Pancreas (tissue), 10 donors: ENCODE measurements at regions of chr3 and their contacts with region 1.

Region 1: DNA sequence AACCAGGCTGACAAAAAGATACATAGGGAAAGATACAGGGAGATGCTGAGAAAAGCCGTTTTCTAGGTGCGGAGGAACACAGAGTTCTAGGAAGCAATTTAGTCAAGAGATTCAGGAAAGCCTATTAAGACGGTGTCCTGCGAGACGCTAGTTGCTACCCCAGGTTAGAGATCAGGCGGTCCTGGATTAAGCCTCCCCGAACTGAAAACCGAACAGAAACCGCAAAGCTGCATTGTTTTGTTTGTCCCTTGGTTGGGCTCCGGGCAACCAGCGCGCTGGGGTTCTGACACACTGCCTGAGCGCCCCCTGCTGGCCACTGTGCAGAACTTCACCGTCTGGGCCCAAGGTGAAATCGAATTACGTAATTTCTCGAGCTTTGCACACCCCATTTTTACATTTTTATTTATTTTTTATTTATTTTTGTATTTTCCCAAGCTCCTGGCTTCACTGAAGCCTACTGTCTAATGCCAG is 37.3 kb upstream of the NDUFB4 start:
- DNase-seq: peak; percentile 83 to 94 (median 88)
- ATAC-seq: peak; percentile 75 to 95 (median 88)
- H3K4me3 ChIP-seq: peak overlapping the region in 2 of 4 donors; percentile 39 to 47
- H3K27ac ChIP-seq: peak overlapping the region in 3 of 4 donors; percentile 39 to 52 (median 50)
- H3K4me1 ChIP-seq: peaks cover 7 to 19% (median 9%) of the 10 kb centered on the region in 3 donors
- H3K27me3 ChIP-seq: no peaks in the 10 kb centered on the region
- CTCF ChIP-seq: peak; percentile 99 to 100 (median 99)

Region 2: DNA sequence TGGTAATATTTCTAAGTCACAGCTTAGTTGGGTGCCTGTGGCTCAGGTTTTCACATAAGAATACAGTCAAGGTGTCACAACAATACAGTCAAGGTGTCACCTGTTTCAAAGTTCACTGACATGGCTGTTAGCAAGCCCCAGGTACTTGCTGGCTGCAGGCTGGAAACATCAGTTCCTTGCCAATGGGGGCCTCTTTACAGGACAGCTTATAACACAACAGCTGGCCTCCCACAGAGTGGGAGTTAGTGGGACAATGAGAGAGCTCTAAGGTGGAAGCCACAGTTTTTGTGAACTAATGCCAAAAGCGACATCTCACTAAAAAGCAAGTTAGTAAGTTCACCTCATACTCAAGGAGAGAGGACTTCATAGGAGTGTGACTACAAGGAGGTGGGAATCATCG is 319.2 kb before region 1 on chr3:
- intact Hi-C with region 1: loop called in 2 of 3 experiments (anchors 5 to 10 kb)
- DNase-seq: no peak
- ATAC-seq: no peak
- H3K4me3 ChIP-seq: no peak overlapping the region
- H3K27ac ChIP-seq: no peak overlapping the region
- H3K4me1 ChIP-seq: no peaks in the 10 kb centered on the region
- H3K27me3 ChIP-seq: peaks cover 0 to 11% (median 0%) of the 10 kb centered on the region in 4 donors
- CTCF ChIP-seq: no peak

Region 3: DNA sequence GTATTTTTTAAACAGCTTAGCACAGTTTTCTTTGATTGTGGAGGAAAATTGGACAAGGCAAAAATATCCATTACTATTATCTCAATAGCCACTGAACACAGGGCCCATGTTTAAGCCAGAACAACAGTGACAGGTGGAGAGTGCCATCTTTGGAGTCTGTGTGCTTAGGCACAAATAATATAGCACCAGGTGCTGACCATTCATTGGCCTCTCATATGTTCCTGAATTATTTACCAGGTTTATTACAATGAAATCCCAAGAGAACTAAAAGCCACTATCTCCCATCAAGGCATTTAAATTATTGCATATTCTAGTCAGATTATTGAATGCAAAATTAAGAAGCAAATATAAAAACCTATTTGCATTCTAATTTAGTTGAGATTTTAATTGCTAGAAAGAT is 313.4 kb before region 1 on chr3:
- intact Hi-C with region 1: loop called in 2 of 3 experiments (anchors 5 to 10 kb)
- DNase-seq: no peak
- ATAC-seq: no peak
- H3K4me3 ChIP-seq: no peak overlapping the region
- H3K27ac ChIP-seq: no peak overlapping the region
- H3K4me1 ChIP-seq: no peaks in the 10 kb centered on the region
- H3K27me3 ChIP-seq: peaks cover 0 to 11% (median 0%) of the 10 kb centered on the region in 4 donors
- CTCF ChIP-seq: no peak

Region 4: DNA sequence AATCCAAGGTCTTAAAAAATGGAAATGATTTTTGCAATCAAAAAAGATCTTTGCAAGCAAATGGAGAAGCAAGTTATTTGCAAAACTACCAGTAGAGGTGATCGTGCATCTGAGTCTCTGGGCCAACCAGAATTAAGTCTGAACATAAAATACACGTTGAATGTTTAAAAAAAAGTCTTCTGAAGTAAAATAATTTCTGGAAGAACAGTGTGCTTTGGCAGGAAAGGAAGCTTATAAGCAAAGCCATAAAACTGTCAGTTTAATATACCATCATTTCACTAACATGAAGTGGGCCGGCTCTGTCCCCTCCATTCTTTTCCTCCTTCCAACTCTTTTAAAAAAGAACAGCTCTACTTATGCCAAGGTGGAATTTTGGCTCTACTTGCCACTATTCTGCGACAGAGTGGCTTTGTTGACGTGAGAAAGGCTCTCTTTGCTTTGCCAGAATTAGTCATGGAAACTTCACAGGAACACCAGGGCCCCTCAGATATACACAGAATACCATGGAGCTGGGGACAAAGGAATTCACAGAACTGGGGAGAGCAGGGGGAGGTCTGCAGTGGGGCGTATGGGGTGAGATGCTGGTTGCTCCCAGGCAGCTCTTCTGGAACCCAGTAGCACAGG is 137.8 kb before region 1 on chr3:
- intact Hi-C with region 1: loop called in 1 of 3 experiments (anchors 10 kb)
- DNase-seq: no peak
- ATAC-seq: no peak
- H3K4me3 ChIP-seq: no peak overlapping the region
- H3K27ac ChIP-seq: peak overlapping the region in 3 of 4 donors; percentile 34 to 59 (median 40)
- H3K4me1 ChIP-seq: peaks cover 0 to 7% (median 0%) of the 10 kb centered on the region in 3 donors
- H3K27me3 ChIP-seq: no peaks in the 10 kb centered on the region
- CTCF ChIP-seq: no peak

Region 5: GRCh38 chr3:120795017-120795648 is 236.3 kb after region 1 on chr3:
- intact Hi-C with region 1: loop called in 2 of 3 experiments (anchors 5 kb)
- DNase-seq: peak in 5 of 6 donors; percentile 33 to 87 (median 72)
- ATAC-seq: peak; percentile 76 to 97 (median 88)
- H3K4me3 ChIP-seq: no peak overlapping the region
- H3K27ac ChIP-seq: no peak overlapping the region
- H3K4me1 ChIP-seq: no peaks in the 10 kb centered on the region
- H3K27me3 ChIP-seq: no peaks in the 10 kb centered on the region
- CTCF ChIP-seq: peak; percentile 40 to 65 (median 52)